ENCODE measurements at regions of chr1 and their contacts with region 1.

Region 1: GRCh38 chr1:7902478-7903085 is 38.1 kb downstream of the TNFRSF9 start:
- DNase-seq: peak; percentile 47
- H3K4me3 ChIP-seq: no peak overlapping the region
- H3K27ac ChIP-seq: no peak overlapping the region
- H3K4me1 ChIP-seq: peaks cover 3% of the 10 kb centered on the region
- H3K27me3 ChIP-seq: no peaks in the 10 kb centered on the region
- CTCF ChIP-seq: peak; percentile 61 to 76

Region 2: GRCh38 chr1:7334475-7335035 is 568.0 kb before region 1 on chr1:
- CTCF ChIA-PET with region 1: no interaction called
- dilution Hi-C with region 1: no loop called
- in situ Hi-C with region 1: no loop called
- intact Hi-C with region 1: no loop called
- DNase-seq: peak; percentile 88
- H3K4me3 ChIP-seq: no peak overlapping the region
- H3K27ac ChIP-seq: no peak overlapping the region
- H3K4me1 ChIP-seq: peaks cover 21% of the 10 kb centered on the region
- H3K27me3 ChIP-seq: no peaks in the 10 kb centered on the region
- CTCF ChIP-seq: no peak

Region 3: GRCh38 chr1:7667625-7668218 is 234.9 kb before region 1 on chr1:
- CTCF ChIA-PET with region 1: interaction called, 7 read pairs
- dilution Hi-C with region 1: no loop called
- in situ Hi-C with region 1: loop called (anchors 5 kb)
- intact Hi-C with region 1: loop called (anchors 1 kb)
- DNase-seq: peak; percentile 62
- H3K4me3 ChIP-seq: no peak overlapping the region
- H3K27ac ChIP-seq: no peak overlapping the region
- H3K4me1 ChIP-seq: peaks cover 4% of the 10 kb centered on the region
- H3K27me3 ChIP-seq: no peaks in the 10 kb centered on the region
- CTCF ChIP-seq: peak; percentile 99 to 100

Region 4: DNA sequence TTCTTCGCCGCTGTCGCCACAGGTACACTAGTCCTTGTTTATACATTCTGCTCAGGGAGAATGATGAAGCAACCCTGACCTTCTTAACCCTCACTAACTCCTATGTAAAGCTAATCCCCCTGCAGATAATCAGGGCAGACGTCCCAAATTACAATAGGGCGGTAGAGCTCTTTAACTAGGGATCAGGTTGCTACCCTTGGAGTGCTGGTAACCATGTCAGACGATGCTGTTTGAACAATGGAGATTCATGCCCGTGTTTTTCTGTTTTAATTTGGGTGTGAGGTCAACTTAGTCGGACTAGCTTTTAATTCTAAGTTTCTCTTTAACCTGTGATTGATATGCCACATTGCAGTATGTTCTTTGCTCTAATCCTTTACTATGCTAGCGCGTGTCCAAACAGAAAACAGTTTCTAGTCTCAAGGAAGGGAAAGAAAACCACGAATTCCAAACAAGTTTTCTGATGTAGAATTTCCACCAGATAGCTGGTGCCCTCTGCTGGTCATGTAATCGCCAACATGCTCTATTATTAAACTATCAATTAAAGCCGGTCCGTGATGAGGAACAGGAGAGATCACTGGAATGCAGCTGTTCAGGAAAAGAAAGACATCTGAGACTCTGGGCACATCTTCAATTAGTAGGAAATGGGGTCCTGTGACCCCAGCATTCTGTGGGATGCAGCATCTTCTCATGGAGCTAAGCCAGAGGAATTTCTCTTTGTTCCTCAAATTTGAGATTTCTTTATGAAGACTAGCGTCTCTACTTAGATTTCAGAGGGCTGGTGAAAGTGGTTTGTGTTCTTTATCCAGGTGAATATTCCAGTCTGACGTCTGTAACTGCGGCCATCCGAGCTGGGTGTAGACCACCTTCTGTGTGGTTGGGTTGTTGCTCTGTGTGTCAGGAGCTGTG is 149.8 kb before region 1 on chr1:
- CTCF ChIA-PET with region 1: no interaction called
- dilution Hi-C with region 1: no loop called
- in situ Hi-C with region 1: no loop called
- intact Hi-C with region 1: loop called (anchors 1 kb)
- DNase-seq: peak; percentile 51
- H3K4me3 ChIP-seq: peak overlapping the region in 2 of 3 experiments; percentile 2 to 18
- H3K27ac ChIP-seq: no peak overlapping the region
- H3K4me1 ChIP-seq: no peaks in the 10 kb centered on the region
- H3K27me3 ChIP-seq: no peaks in the 10 kb centered on the region
- CTCF ChIP-seq: peak; percentile 75 to 77

Region 5: DNA sequence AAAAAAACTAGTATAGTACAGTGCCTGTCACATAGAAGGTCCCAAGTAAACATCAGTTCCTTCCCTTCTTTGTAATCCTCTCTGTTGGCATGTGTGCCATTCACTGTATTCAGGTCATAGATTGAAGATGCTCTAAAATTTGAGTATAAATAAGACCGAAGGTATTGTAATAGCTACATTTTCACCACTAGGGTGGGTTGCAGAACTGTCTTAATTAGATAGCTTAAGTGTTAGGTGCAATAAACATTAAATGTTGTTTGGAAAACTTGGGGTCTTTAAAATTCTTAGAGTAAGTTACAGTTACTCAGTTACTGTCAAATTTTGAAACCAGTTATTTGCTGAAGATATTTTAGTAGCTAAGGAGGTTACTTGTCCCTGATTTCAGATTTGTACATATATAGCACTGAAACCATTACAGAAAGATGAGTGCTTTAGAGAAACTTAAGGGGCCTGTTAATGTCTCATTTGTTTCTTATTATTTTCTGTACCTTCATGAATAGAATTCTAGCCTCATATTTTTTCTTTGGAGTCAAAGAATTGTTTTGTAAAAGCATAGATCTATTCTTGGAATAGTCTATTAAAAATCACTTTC is 94.2 kb before region 1 on chr1:
- CTCF ChIA-PET with region 1: no interaction called
- dilution Hi-C with region 1: no loop called
- in situ Hi-C with region 1: loop called in 1 of 2 experiments (anchors 10 kb)
- intact Hi-C with region 1: loop called (anchors 1 kb)
- DNase-seq: peak; percentile 27
- H3K4me3 ChIP-seq: no peak overlapping the region
- H3K27ac ChIP-seq: no peak overlapping the region
- H3K4me1 ChIP-seq: peaks cover 9% of the 10 kb centered on the region
- H3K27me3 ChIP-seq: no peaks in the 10 kb centered on the region
- CTCF ChIP-seq: peak; percentile 50 to 53

Region 6: GRCh38 chr1:7856345-7856744 is 46.2 kb before region 1 on chr1:
- CTCF ChIA-PET with region 1: no interaction called
- dilution Hi-C with region 1: loop called (anchors 5 kb)
- in situ Hi-C with region 1: no loop called
- intact Hi-C with region 1: no loop called
- DNase-seq: no peak
- H3K4me3 ChIP-seq: no peak overlapping the region
- H3K27ac ChIP-seq: no peak overlapping the region
- H3K4me1 ChIP-seq: no peaks in the 10 kb centered on the region
- H3K27me3 ChIP-seq: no peaks in the 10 kb centered on the region
- CTCF ChIP-seq: no peak

Region 7: DNA sequence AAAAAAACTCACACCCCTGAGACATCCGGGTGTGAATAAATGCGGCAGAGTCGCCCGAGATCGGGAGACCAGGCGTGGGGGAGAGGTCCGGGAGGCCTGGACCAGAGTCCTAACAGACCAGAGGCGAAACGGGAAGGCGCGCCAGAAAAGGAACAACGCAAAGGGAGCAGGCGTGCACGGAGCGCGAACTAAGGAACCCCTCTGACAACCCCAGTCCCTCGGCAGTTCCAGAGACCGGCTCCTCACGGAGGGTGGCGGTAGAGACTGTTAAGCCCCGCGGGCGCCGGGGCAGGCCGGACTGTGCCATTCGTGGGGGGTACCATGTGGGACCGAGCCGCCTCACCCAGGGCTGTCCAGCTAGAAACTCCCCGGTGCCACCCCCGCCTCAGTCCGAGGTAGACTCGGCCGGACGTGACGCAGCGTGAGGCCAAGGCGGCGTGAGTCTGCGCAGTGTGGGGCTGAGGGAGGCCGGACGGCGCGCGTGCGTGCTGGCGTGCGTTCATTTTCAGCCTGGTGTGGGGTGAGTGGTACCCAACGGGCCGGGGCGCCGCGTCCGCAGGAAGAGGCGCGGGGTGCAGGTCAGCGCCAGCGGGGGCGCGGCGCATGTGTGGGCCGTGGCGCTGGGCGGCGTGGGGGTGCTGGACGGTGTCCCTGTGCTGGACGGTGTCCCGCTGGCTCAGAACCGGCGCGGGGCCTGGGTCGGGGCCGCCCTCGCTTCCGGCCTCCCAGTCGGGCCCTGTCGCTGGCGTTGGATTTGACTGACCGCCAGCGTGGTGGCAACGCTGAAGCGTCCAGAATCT is 58.8 kb after region 1 on chr1 and contains the start of gene PARK7:
- CTCF ChIA-PET with region 1: no interaction called
- dilution Hi-C with region 1: no loop called
- in situ Hi-C with region 1: no loop called
- intact Hi-C with region 1: loop called (anchors 1 kb)
- DNase-seq: peak; percentile 100
- H3K4me3 ChIP-seq: peak within 1 kb of the TSS; percentile 89 to 92 (median 92)
- H3K27ac ChIP-seq: peak within 1 kb of the TSS; percentile 84
- H3K4me1 ChIP-seq: peaks cover 11% of the 10 kb centered on the region
- H3K27me3 ChIP-seq: no peaks in the 10 kb centered on the region
- CTCF ChIP-seq: peak; percentile 41 to 61
- total RNA-seq, gene PARK7: 106 to 264 TPM

Region 8: GRCh38 chr1:8015036-8015808 is 112.6 kb after region 1 on chr1:
- CTCF ChIA-PET with region 1: no interaction called
- dilution Hi-C with region 1: loop called (anchors 25 kb)
- in situ Hi-C with region 1: no loop called
- intact Hi-C with region 1: no loop called
- DNase-seq: peak; percentile 78
- H3K4me3 ChIP-seq: no peak overlapping the region
- H3K27ac ChIP-seq: peak overlapping the region; percentile 30
- H3K4me1 ChIP-seq: peaks cover 58% of the 10 kb centered on the region
- H3K27me3 ChIP-seq: no peaks in the 10 kb centered on the region
- CTCF ChIP-seq: peak; percentile 60 to 67